ENCODE measurements at regions of chr3 and their contacts with region 1.

Region 1: DNA sequence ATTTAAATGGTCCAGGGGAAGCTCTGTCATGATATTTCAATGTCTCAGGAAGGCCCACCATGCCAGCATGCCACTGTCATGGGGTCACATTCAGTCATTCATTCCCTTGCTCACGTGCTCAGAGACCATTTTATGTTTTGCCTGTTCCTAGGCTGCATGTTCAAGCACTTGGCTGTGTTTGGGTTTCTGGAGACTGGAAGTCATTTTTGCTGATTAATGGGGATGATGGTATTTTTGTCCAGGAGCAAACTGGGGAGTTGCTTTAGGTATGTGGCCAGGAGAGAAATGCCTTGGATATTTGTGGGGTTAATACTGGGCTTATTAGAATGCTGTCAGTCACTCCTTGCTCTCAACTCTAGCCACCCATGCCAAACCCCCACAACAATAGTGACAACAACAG is 303.5 kb downstream of the PTPRG start:
- DNase-seq: no peak
- H3K4me3 ChIP-seq: no peak overlapping the region
- H3K27ac ChIP-seq: no peak overlapping the region
- H3K4me1 ChIP-seq: peaks cover 10% of the 10 kb centered on the region
- H3K27me3 ChIP-seq: no peaks in the 10 kb centered on the region
- CTCF ChIP-seq: no peak
- POLR2A ChIP-seq: no peak

Region 2: DNA sequence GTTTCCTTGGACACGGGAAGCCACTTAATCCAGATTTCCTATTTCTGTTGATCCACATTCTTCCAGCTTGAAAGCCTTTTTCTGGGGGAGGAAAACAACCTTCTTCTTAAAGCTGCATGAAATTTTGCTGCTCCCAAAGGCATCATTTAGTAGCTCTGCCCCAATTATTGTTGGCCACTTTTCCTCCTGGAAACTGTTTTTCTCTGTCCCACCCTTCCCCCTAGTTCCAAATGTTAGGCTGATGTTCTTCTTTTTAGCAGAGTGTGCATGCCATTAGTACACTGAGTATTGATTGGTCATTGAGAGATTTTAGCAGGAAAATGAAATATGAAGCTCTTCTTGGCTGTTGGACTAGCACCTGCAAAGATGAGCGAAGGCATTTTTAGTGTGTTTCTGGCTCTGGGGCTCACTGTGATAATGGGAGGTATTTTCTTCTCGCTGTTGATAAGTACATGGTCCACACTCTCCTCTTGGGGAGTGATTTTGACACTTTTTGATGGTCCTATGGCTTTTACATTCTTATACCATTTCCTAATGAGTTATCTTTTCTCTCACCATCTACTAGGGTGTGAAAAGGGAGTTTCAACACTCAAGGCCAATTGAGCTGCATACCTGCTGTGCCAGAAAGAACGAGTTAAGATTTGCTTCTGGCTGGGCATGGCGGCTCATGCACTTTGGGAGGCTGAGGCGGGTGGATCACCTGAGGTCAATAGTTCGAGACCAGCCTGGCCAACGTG is 103.0 kb before region 1 on chr3:
- intact Hi-C with region 1: no loop called
- DNase-seq: no peak
- H3K4me3 ChIP-seq: no peak overlapping the region
- H3K27ac ChIP-seq: no peak overlapping the region
- H3K4me1 ChIP-seq: no peaks in the 10 kb centered on the region
- H3K27me3 ChIP-seq: no peaks in the 10 kb centered on the region
- CTCF ChIP-seq: no peak
- POLR2A ChIP-seq: no peak

Region 3: GRCh38 chr3:62188681-62189383 is 323.9 kb after region 1 on chr3:
- intact Hi-C with region 1: loop called (anchors 10 kb)
- DNase-seq: no peak
- H3K4me3 ChIP-seq: no peak overlapping the region
- H3K27ac ChIP-seq: no peak overlapping the region
- H3K4me1 ChIP-seq: peaks cover 7% of the 10 kb centered on the region
- H3K27me3 ChIP-seq: no peaks in the 10 kb centered on the region
- CTCF ChIP-seq: peak; percentile 63 to 75 (median 71)
- POLR2A ChIP-seq: no peak